AG04450 (cell line): ENCODE measurements at regions of chr7 and their contacts with region 1.

Region 1: GRCh38 chr7:30276203-30276900 is 8.0 kb upstream of the ZNRF2 start:
- DNase-seq: no peak
- H3K4me3 ChIP-seq: no peak overlapping the region
- H3K27ac ChIP-seq: no peak overlapping the region
- H3K27me3 ChIP-seq: peaks cover 7% of the 10 kb centered on the region
- CTCF ChIP-seq: peak; percentile 82

Region 2: DNA sequence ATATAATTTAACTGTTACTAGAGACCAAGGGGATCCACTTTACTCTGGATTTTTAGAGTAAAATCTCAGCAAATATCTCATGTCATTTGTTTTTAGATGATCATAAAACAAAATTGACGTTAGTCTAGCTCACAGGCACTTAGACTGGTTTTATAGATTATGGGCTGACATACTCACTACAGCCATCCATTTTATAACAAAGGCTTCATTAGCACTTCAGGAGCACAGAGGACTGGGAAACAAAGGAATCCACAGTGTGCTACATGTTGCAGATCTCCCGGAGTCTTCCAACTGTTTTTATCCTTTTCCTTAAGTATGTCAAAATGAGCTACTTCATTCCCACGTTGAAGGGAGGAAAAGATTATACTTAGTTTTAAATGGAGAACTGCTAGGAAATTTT is 270.9 kb before region 1 on chr7:
- CTCF ChIA-PET with region 1: no interaction called
- POLR2A ChIA-PET with region 1: no interaction called
- DNase-seq: no peak
- H3K4me3 ChIP-seq: no peak overlapping the region
- H3K27ac ChIP-seq: no peak overlapping the region
- H3K27me3 ChIP-seq: no peaks in the 10 kb centered on the region
- CTCF ChIP-seq: no peak

Region 3: DNA sequence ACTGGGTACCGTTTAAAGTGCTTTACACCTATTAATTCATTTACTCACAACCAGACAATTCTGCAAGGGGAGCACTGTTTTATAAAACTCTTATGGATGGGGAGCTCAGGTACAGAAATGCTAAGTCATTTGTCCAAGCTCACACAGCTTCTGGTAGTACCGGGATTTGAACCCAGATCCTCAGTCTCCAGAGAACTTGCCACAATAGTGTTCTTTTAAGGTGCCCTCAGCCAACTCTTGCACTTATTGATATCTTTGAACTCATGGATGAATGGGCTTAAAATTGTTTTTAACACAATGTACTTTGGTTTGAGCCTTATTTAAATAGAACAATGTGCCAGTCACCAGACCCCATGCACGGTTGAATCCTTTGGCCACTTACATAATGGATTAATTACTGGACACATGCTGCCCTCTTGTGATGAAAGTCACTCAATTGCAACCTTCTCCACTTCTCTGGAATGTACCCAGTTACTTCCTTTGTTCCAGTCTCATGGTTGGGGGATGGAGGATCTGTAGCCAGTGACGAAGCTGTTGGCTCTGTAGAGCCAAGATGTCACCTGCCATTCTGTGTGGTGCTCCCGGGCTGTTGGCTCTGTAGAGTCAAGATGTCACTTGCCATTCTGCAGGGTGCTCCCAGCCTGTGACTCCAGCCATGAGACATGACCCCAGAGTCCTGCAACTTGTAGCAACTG is 136.6 kb after region 1 on chr7:
- CTCF ChIA-PET with region 1: interaction called, 54 read pairs
- POLR2A ChIA-PET with region 1: no interaction called
- DNase-seq: peak; percentile 61
- H3K4me3 ChIP-seq: no peak overlapping the region
- H3K27ac ChIP-seq: no peak overlapping the region
- H3K27me3 ChIP-seq: no peaks in the 10 kb centered on the region
- CTCF ChIP-seq: peak; percentile 60